ENCODE measurements at regions of chr12 and their contacts with region 1.

Region 1: GRCh38 chr12:6873094-6874014 is at the start of gene SPSB2:
- DNase-seq: peak; percentile 98 to 100
- ATAC-seq: peak; percentile 79
- total RNA-seq, gene SPSB2: 11.7 to 11.8 TPM

Region 2: DNA sequence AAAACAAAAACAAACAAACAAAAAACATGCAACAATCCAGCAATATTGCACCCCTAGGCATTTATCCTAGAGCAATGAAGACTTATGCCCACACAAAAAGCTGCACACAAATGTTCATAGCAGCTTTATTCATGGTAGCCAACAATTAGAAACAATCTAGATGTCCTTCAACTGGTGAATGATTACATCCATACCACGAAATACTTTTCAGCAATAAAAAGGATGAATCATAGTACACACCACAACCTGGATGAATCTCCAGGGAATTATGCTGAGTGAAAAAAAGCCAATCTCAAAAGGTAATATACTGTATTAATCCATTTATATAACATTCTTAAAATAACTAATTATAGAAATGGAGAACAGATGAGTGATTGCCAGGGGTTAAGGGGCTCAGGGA is 66.2 kb before region 1 on chr12:
- intact Hi-C with region 1: no loop called
- DNase-seq: no peak
- ATAC-seq: peak; percentile 40

Region 3: GRCh38 chr12:6965026-6965661 is 91.8 kb after region 1 on chr12:
- intact Hi-C with region 1: loop called in 1 of 2 experiments (anchors 5 kb)
- DNase-seq: peak; percentile 92
- ATAC-seq: peak; percentile 37

Measured in left colon (tissue), 2 donors.